ENCODE measurements at regions of chr1 and their contacts with region 1.

Region 1: GRCh38 chr1:20430355-20431175 is 55.4 kb downstream of the CAMK2N1 start:
- DNase-seq: peak; percentile 50 to 94
- H3K4me3 ChIP-seq: no peak overlapping the region
- H3K27ac ChIP-seq: no peak overlapping the region
- H3K4me1 ChIP-seq: peaks cover 0 to 6% (median 0%) of the 10 kb centered on the region in 4 experiments; a peak in 2 of 7 replicates
- H3K27me3 ChIP-seq: peaks cover 0 to 5% (median under 1%) of the 10 kb centered on the region in 4 experiments; a peak in 3 of 7 replicates
- CTCF ChIP-seq: peak; percentile 93 to 96 (median 93)
- EP300 ChIP-seq: no peak
- POLR2A ChIP-seq: no peak
- RAD21 ChIP-seq: peak; percentile 96 to 98

Region 2: GRCh38 chr1:20361806-20362640 is 68.5 kb before region 1 on chr1:
- CTCF ChIA-PET with region 1: interaction called, 51 read pairs
- POLR2A ChIA-PET with region 1: interaction called, 3 read pairs
- DNase-seq: peak; percentile 54 to 99
- H3K4me3 ChIP-seq: no peak overlapping the region
- H3K27ac ChIP-seq: no peak overlapping the region
- H3K4me1 ChIP-seq: peaks cover 0 to 10% (median 4%) of the 10 kb centered on the region in 4 experiments; a peak in 4 of 7 replicates
- H3K27me3 ChIP-seq: peaks cover 13 to 48% (median 30%) of the 10 kb centered on the region in 4 experiments
- CTCF ChIP-seq: peak; percentile 96 to 98 (median 97)
- EP300 ChIP-seq: no peak
- POLR2A ChIP-seq: no peak
- RAD21 ChIP-seq: peak; percentile 90 to 91

Region 3: GRCh38 chr1:20390589-20391331 is 39.8 kb before region 1 on chr1:
- CTCF ChIA-PET with region 1: interaction called, 17 read pairs
- POLR2A ChIA-PET with region 1: no interaction called
- DNase-seq: no peak
- H3K4me3 ChIP-seq: no peak overlapping the region
- H3K27ac ChIP-seq: no peak overlapping the region
- H3K4me1 ChIP-seq: peaks cover 0 to 7% (median 3%) of the 10 kb centered on the region in 4 experiments; a peak in 3 of 7 replicates
- H3K27me3 ChIP-seq: peaks cover 0 to 5% (median 1%) of the 10 kb centered on the region in 4 experiments; a peak in 4 of 7 replicates
- CTCF ChIP-seq: no peak
- EP300 ChIP-seq: no peak
- POLR2A ChIP-seq: no peak
- RAD21 ChIP-seq: no peak

Region 4: DNA sequence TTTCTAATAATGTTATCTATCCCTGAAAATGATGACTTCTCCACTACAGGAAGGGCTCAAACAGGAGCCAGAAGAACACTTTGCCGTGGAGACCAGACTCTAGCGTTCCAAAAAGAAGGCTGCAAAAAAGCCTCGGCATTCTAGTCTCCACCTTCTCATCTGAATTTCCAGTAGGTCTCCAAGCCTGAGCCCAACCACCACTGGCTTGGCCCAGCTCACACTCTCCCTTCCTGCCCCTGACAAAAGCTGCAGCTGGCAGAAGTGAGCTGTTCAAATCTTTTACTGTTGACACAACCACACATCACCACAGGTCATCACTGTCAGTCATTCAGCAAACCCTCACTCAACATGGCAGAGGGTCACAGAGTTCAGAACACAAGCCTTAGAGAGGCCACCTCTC is 13.9 kb before region 1 on chr1:
- CTCF ChIA-PET with region 1: interaction called, 63 read pairs
- POLR2A ChIA-PET with region 1: interaction called, 4 read pairs
- DNase-seq: no peak
- H3K4me3 ChIP-seq: no peak overlapping the region
- H3K27ac ChIP-seq: no peak overlapping the region
- H3K4me1 ChIP-seq: no peaks in the 10 kb centered on the region
- H3K27me3 ChIP-seq: peaks cover 2 to 21% (median 5%) of the 10 kb centered on the region in 4 experiments; a peak in 5 of 7 replicates
- CTCF ChIP-seq: no peak
- EP300 ChIP-seq: no peak
- POLR2A ChIP-seq: no peak
- RAD21 ChIP-seq: no peak

Region 5: DNA sequence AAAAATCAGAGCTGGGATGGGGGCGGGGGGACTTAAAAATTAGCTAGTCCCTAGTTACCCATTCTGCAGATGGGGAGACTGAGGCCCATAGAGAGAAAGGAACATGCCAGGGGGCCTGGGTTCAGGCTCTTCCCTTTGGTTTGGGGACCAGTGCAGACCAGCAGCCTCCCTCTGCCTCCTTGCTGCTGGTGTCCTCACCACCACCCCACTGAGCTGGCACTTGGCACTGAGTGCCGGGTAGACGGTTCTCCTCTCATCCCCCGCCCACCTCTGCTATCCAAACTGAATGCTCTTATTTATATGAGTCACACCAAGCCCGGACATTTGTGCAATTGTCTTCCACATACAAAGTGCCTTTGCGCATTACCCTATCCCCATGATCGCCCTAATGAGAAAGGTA is 16.2 kb after region 1 on chr1:
- CTCF ChIA-PET with region 1: interaction called, 45 read pairs
- POLR2A ChIA-PET with region 1: no interaction called
- DNase-seq: no peak
- H3K4me3 ChIP-seq: no peak overlapping the region
- H3K27ac ChIP-seq: no peak overlapping the region
- H3K4me1 ChIP-seq: peaks cover 2 to 15% (median 5%) of the 10 kb centered on the region in 4 experiments; a peak in 5 of 7 replicates
- H3K27me3 ChIP-seq: no peaks in the 10 kb centered on the region; a peak in 2 of 7 replicates
- CTCF ChIP-seq: no peak
- EP300 ChIP-seq: no peak
- POLR2A ChIP-seq: no peak
- RAD21 ChIP-seq: no peak

Region 6: GRCh38 chr1:20584890-20585289 is 154.3 kb after region 1 on chr1:
- CTCF ChIA-PET with region 1: no interaction called
- POLR2A ChIA-PET with region 1: no interaction called
- DNase-seq: no peak
- H3K4me3 ChIP-seq: no peak overlapping the region
- H3K27ac ChIP-seq: no peak overlapping the region
- H3K4me1 ChIP-seq: peaks cover 0 to 15% (median 8%) of the 10 kb centered on the region in 4 experiments; a peak in 4 of 7 replicates
- H3K27me3 ChIP-seq: no peaks in the 10 kb centered on the region
- CTCF ChIP-seq: no peak
- EP300 ChIP-seq: no peak
- POLR2A ChIP-seq: no peak
- RAD21 ChIP-seq: no peak